ENCODE measurements at regions of chr14 and their contacts with region 1.

Region 1: DNA sequence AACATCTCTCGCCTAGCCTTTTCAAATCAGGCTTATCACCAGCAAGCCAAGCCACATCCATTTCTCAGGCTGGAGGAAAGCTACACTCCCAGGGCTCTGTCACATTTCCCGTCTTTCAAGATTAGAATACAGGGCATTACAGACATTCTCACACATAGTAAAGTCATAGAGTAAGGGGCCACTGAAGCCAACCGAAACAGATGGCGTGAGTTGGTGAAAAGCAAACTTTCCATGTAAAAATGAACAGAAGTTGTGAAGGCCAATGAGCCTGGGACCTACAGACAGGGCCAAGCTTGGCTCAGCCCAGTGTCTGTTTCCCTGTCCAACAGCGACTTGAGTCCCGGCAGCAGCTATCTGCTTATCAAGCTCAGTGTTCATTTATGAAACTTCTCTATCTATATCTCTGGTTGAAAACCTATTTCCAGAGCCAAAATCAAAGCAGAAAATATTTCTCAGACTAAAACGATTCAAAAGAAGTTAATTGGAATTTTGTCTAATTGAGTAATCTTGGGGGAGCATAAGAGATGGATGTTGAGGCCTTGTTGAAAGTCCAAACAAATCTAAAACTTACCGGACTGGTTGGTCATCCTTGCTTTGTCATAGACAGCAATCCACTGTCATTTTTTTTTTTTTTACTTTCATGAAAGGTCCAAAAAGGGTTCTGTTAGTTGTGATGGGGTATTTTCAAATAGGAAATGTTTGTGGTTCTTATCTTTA is 105.6 kb downstream of the DAAM1 start:
- DNase-seq: no peak

Region 2: DNA sequence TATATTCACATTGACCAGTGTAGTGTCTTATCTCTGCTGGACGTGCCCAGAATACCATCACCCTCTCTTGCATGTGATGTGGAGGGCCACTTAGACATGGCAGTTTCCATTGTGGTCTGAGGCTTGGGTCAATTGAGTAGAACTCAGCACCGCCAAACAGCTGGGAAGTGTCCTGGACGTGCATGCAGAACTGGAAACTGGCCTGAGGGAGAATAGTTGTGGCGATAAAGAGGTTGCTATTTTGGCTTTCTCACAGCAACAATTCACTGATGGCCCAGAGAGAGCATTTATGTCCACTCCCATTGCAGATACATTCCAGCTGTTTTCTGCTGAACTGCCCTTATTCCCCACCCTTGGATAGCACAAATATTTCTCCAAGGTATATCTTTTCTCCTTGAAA is 315.8 kb before region 1 on chr14:
- intact Hi-C with region 1: no loop called
- DNase-seq: no peak

Region 3: GRCh38 chr14:59275653-59276052 is 18.4 kb before region 1 on chr14:
- intact Hi-C with region 1: loop called (anchors 2 kb)
- DNase-seq: no peak

Measured in cardiac septum (tissue), 1 donor.